H1 (cell line): ENCODE measurements at regions of chr3 and their contacts with region 1.

Region 1: GRCh38 chr3:109369510-109369909 is 32.2 kb upstream of the DPPA4 start:
- DNase-seq: peak in 1 of 2 experiments; percentile 51
- H3K4me3 ChIP-seq: no peak overlapping the region
- H3K27ac ChIP-seq: no peak overlapping the region
- H3K4me1 ChIP-seq: no peaks in the 10 kb centered on the region
- H3K27me3 ChIP-seq: no peaks in the 10 kb centered on the region
- CTCF ChIP-seq: peak; percentile 62 to 81 (median 72)
- EP300 ChIP-seq: no peak
- POLR2A ChIP-seq: no peak
- RAD21 ChIP-seq: peak; percentile 73 to 79

Region 2: DNA sequence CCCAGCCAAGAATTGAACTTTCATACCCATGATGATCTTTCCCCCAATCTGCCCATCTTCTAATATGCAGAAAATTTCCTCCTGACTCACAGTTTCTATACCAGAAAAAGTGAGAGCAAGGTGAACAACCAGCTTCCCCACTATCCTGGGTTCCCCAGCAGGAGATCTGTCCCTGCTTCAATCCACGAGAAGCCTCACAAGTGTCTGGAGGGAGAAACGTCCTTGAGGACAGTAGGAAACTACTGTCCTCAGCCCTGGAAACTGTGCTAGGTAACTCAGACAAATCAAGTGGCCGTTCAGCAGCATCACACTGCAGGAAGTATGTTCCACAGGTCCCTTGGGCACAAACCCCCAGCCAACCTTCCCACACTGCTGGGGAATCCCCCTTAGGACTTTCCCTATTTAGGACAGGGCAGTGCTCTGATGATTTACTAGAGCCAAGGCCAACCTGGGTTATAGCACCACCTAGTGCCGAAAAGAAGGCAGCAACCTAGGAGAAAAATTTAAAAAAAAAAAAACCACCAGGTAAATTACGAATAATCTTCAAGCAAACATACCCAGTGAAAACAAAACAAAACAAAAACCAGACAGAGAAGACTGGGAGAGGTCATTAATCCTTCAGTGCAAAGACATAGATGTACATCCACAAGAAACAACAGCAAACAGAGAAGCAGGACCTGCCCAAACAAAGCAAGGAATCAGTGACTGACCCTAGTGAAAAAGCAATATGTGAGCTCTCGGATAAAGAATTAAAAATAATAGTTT is 287.6 kb before region 1 on chr3:
- CTCF ChIA-PET with region 1: no interaction called
- POLR2A ChIA-PET with region 1: no interaction called
- DNase-seq: peak; percentile 31 to 62
- H3K4me3 ChIP-seq: no peak overlapping the region
- H3K27ac ChIP-seq: no peak overlapping the region
- H3K4me1 ChIP-seq: peaks cover 0 to 3% (median 0%) of the 10 kb centered on the region in 4 experiments; a peak in 3 of 7 replicates
- H3K27me3 ChIP-seq: no peaks in the 10 kb centered on the region
- CTCF ChIP-seq: peak in 2 of 3 experiments; percentile 64 to 80; a peak in 3 of 4 replicates
- EP300 ChIP-seq: no peak
- POLR2A ChIP-seq: no peak
- RAD21 ChIP-seq: peak; percentile 90 to 95

Region 3: DNA sequence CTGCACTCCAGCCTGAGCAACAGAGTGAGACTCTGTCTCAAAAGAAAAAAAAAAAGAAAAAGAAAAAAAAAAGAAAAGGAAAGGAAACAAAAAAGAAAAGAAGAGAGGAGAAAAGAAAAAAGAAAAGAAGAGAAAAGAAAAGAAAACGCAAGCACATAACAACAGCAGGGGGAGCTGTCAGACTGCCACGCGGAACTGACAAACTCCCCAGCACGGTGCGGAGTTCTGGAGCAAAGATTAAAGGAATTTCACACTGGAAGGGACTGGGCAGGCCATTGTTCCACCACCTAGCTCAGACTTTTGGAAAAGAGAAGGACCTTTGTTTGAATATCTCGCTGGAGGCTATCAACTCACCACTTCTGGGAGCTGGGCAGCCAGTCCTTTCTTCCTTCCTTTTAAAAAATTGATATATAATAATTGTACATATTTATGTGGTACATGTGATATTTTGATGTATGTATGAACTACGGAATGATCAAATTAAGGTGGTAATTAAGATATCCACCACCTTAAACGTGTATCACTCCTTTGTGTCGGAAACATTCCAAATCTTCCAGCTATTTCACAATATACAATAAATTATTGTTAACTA is 93.7 kb before region 1 on chr3:
- CTCF ChIA-PET with region 1: interaction called, 11 read pairs
- POLR2A ChIA-PET with region 1: interaction called, 3 read pairs
- DNase-seq: peak; percentile 3 to 63
- H3K4me3 ChIP-seq: no peak overlapping the region
- H3K27ac ChIP-seq: no peak overlapping the region
- H3K4me1 ChIP-seq: no peaks in the 10 kb centered on the region; a peak in 2 of 7 replicates
- H3K27me3 ChIP-seq: no peaks in the 10 kb centered on the region
- CTCF ChIP-seq: peak; percentile 55 to 83 (median 63)
- EP300 ChIP-seq: 0 out of 3 replicates have a peak, but pooled peaks of 1 of the 2 experiments have one; percentile 3
- POLR2A ChIP-seq: no peak
- RAD21 ChIP-seq: peak; percentile 92 to 97

Region 4: DNA sequence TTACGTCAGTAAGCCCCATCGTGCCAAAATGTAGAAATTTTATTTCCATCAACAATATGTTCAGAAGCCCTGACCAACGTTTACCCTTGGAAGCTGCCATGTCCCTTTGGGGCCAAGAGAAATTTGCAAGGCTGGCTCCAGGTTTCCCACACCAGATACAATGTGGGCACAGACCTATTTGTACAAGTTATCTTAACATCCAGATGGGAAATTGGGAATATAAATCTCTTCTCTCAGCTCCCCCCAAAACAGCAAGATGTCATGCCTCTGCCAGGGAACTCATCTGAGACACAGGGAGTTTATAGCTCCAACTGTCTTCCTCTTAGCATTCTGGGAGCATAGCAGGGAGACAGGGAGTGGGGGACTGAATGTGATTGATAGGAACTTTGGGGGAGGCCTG is 43.9 kb before region 1 on chr3:
- CTCF ChIA-PET with region 1: interaction called, 7 read pairs
- POLR2A ChIA-PET with region 1: interaction called, 402 read pairs
- DNase-seq: peak in 1 of 2 experiments; percentile 60
- H3K4me3 ChIP-seq: no peak overlapping the region
- H3K27ac ChIP-seq: no peak overlapping the region
- H3K4me1 ChIP-seq: no peaks in the 10 kb centered on the region; a peak in 1 of 7 replicates
- H3K27me3 ChIP-seq: no peaks in the 10 kb centered on the region
- CTCF ChIP-seq: no peak
- EP300 ChIP-seq: no peak
- POLR2A ChIP-seq: peak; percentile 54 to 86; a peak in 2 of 3 replicates
- RAD21 ChIP-seq: no peak

Region 5: DNA sequence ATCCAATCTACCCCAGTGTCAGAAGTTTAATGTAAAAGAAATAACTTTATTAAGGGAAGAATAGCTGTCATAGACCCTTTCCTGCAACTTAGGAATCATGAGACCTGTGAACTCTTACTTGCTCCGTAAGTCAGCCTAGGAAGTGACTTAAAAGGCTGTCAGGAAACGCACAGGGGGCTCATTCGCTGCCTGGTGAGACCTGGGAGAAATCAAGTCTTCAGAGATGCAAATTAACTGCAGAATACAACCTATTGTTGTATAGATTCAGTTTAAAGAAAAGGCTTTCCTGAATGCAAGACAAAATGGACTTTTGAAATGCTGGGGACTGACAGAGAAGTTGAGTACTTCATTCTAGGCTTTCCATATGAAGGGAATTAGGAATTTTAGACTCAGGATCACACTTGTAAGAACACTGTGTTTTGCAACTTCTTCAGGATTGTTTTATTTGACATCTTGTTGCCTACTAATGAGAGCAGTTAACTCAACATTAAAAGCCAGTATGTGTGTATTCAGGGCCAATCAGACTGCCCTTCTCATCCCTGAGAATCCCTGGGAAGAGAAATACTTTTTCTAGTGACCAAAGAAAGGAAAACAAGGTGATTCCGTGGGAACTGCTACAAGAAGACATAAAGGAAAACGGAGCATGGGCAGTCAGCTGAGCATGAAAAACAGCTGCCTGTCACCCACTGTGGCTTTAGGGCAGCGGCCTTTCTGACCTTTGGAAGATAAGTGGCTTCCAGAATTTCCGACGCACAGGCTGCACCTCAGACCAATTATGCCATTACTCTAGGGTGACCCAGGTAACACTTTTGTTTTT is 13.7 kb before region 1 on chr3:
- CTCF ChIA-PET with region 1: interaction called, 17 read pairs
- POLR2A ChIA-PET with region 1: interaction called, 40 read pairs
- DNase-seq: peak in 1 of 2 experiments; percentile 92
- H3K4me3 ChIP-seq: peak overlapping the region in 3 of 4 experiments; percentile 15 to 48 (median 26); a peak in 4 of 8 replicates
- H3K27ac ChIP-seq: peak overlapping the region; percentile 36; the same call in 1 of the 2 replicates
- H3K4me1 ChIP-seq: peaks cover 2 to 12% (median 7%) of the 10 kb centered on the region in 4 experiments; a peak in 6 of 7 replicates
- H3K27me3 ChIP-seq: no peaks in the 10 kb centered on the region
- CTCF ChIP-seq: no peak
- EP300 ChIP-seq: no peak
- POLR2A ChIP-seq: peak in 1 of 2 experiments; percentile 11
- RAD21 ChIP-seq: no peak

Region 6: GRCh38 chr3:109382583-109382982 is 13.1 kb after region 1 on chr3:
- CTCF ChIA-PET with region 1: interaction called, 13 read pairs
- POLR2A ChIA-PET with region 1: interaction called, 4 read pairs
- DNase-seq: no peak
- H3K4me3 ChIP-seq: no peak overlapping the region
- H3K27ac ChIP-seq: no peak overlapping the region
- H3K4me1 ChIP-seq: peaks cover 0 to 2% (median 0%) of the 10 kb centered on the region in 4 experiments; a peak in 1 of 7 replicates
- H3K27me3 ChIP-seq: no peaks in the 10 kb centered on the region
- CTCF ChIP-seq: no peak
- EP300 ChIP-seq: no peak
- POLR2A ChIP-seq: no peak
- RAD21 ChIP-seq: no peak